PC-9 (cell line): ENCODE measurements at regions of chr1 and their contacts with region 1.

Region 1: GRCh38 chr1:242043165-242043564 is 44.3 kb upstream of the MAP1LC3C start:
- DNase-seq: no peak
- H3K4me3 ChIP-seq: no peak overlapping the region
- H3K27ac ChIP-seq: no peak overlapping the region
- H3K4me1 ChIP-seq: no peaks in the 10 kb centered on the region
- H3K27me3 ChIP-seq: peaks cover 19% of the 10 kb centered on the region
- CTCF ChIP-seq: no peak

Region 2: DNA sequence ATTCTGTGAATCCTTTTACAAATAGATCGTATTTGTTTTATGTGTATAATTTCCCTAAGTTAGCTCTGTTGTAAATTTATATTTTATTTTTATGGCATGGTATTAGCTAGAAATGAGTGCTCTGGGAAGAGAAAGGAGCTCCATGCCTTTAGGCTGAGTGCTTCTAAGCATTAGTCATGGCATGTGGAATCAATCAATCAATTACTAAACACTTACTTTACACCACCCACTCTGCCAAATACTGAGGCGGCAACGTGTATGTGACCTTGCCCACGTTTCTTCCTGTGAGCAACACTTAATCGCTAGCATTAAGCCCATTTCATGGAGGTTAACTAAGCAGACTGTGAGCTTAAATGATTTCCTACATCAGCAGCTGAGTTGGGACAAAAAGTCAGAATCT is 92.8 kb before region 1 on chr1:
- CTCF ChIA-PET with region 1: no interaction called
- POLR2A ChIA-PET with region 1: no interaction called
- intact Hi-C with region 1: no loop called
- DNase-seq: no peak
- H3K4me3 ChIP-seq: no peak overlapping the region
- H3K27ac ChIP-seq: no peak overlapping the region
- H3K4me1 ChIP-seq: no peaks in the 10 kb centered on the region
- H3K27me3 ChIP-seq: no peaks in the 10 kb centered on the region
- CTCF ChIP-seq: no peak

Region 3: DNA sequence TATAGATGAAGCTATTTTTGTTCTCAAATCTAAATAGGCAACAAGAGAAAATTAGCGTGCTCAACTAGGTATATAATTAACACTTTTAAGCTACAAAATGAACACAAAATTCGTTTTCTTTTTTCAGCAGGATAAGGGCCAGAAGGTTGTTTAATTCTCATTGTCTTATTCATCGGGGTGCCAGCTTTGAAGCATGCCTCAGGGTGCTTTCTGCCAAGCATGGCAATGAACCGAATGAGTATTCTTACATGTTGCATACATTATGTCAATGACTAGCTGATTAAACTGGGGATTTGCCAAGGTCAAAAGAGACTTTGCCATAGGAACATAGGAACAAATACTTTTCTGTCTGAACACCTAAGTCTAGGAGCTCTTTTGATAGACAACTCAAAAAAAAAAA is 57.8 kb after region 1 on chr1:
- CTCF ChIA-PET with region 1: interaction called, 10 read pairs
- POLR2A ChIA-PET with region 1: no interaction called
- intact Hi-C with region 1: no loop called
- DNase-seq: no peak
- H3K4me3 ChIP-seq: no peak overlapping the region
- H3K27ac ChIP-seq: no peak overlapping the region
- H3K4me1 ChIP-seq: no peaks in the 10 kb centered on the region
- H3K27me3 ChIP-seq: peaks cover 8% of the 10 kb centered on the region
- CTCF ChIP-seq: no peak

Region 4: GRCh38 chr1:242187816-242188215 is 144.7 kb after region 1 on chr1:
- CTCF ChIA-PET with region 1: no interaction called
- POLR2A ChIA-PET with region 1: no interaction called
- intact Hi-C with region 1: no loop called
- DNase-seq: no peak
- H3K4me3 ChIP-seq: no peak overlapping the region
- H3K27ac ChIP-seq: no peak overlapping the region
- H3K4me1 ChIP-seq: no peaks in the 10 kb centered on the region
- H3K27me3 ChIP-seq: peaks cover 8% of the 10 kb centered on the region; the same call in 1 of the 2 replicates
- CTCF ChIP-seq: no peak

Region 5: DNA sequence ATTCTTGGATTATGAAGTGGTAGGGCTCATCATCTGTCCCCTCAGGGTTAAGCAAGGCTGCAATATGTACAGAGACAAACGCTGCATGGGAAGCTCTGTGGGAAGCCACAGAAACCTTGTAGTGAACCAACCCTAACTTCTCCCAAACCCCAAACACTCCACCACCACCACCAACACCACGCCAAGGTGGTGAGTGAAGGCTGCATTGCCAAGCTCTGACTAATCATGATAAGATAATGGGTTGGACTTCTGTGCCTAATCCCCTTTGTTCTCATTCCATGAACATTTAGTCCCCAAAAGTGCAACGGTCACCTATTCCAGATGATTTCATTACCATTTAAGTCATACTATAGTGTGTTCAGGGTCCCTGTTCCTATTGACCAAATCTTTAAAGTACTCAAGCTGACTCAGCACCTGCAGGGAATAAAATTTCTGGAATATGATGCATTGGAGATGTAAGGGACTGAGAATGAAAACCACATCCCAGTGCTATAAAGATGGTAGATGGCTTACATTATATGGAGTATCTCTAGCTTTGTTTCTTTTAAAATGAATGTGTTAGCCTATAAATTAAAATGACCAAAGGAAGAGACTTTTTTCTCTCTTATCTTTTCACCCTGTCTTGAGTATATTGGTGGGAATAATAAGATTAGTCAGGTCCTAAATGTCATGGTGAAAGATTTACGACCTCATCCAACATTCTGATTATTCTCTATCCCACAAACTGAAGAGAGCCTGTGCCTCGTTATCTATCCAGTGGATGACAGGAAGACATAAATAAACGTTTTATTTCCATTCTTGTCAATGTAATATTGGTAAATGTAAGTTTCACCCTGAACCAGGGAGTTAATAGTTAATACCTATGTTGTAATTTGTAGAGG is 503.9 kb after region 1 on chr1:
- CTCF ChIA-PET with region 1: no interaction called
- POLR2A ChIA-PET with region 1: no interaction called
- intact Hi-C with region 1: no loop called
- DNase-seq: no peak
- H3K4me3 ChIP-seq: no peak overlapping the region
- H3K27ac ChIP-seq: no peak overlapping the region
- H3K4me1 ChIP-seq: no peaks in the 10 kb centered on the region
- H3K27me3 ChIP-seq: no peaks in the 10 kb centered on the region
- CTCF ChIP-seq: no peak